ENCODE measurements at regions of chr10 and their contacts with region 1.

Region 1: DNA sequence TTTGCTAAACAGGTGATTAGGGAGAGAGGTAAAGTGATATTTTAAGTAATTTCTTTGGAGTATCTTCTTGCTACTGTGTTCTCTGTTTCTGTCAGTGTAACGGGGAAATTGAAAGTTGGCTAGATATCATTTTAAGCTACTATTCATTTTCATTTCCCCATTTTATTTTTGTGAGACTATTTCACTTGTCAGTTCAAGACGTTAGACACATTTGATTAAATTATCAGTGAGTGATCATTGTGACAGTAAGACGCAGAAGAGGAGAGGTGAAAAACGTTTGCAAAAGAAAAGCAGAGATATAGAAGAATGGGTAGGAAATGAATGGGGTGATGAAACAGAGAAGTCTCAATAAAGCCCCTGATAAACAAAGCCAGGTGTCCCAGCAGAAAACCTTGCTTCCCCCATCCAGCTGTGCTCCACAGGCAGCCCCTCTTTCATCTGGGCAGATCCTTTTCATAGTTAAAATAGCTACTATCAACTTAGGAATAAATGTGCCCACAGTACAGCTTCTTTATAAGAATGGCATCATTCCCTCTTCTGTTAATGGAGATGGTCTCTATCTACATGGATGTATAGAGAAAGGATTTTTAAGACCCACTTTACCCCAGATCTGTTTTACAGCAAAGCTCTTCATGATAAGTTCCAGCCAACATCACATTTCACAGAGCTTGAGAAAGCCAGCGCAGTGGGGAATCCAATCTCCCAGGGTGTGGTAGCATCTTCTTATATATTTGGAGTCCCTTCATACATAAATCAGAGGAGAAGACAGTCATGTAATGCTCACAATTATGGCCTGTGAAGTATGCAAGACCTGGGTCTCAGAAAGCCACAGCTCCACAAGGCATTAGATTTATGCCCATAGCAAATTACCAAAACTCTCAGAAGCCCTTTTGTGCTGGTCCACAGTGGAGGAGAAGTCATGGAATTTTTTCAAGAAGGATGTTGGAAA is 138.1 kb upstream of the ITGB1 start:
- DNase-seq: no peak
- ATAC-seq: peak; percentile 66
- H3K4me3 Mint-ChIP-seq: peak overlapping the region; percentile 36
- H3K27ac Mint-ChIP-seq: peak overlapping the region; percentile 72
- H3K4me1 Mint-ChIP-seq: peaks cover 74% of the 10 kb centered on the region
- H3K27me3 Mint-ChIP-seq: no peaks in the 10 kb centered on the region
- CTCF ChIP-seq: no peak

Region 2: GRCh38 chr10:33032654-33033151 is 63.4 kb before region 1 on chr10:
- CTCF ChIA-PET with region 1: interaction called, 3 read pairs
- POLR2A ChIA-PET with region 1: no interaction called
- intact Hi-C with region 1: loop called (anchors 5 kb)
- DNase-seq: no peak
- ATAC-seq: no peak
- H3K4me3 Mint-ChIP-seq: no peak overlapping the region
- H3K27ac Mint-ChIP-seq: no peak overlapping the region
- H3K4me1 Mint-ChIP-seq: no peaks in the 10 kb centered on the region
- H3K27me3 Mint-ChIP-seq: peaks cover 3% of the 10 kb centered on the region
- CTCF ChIP-seq: no peak

Region 3: DNA sequence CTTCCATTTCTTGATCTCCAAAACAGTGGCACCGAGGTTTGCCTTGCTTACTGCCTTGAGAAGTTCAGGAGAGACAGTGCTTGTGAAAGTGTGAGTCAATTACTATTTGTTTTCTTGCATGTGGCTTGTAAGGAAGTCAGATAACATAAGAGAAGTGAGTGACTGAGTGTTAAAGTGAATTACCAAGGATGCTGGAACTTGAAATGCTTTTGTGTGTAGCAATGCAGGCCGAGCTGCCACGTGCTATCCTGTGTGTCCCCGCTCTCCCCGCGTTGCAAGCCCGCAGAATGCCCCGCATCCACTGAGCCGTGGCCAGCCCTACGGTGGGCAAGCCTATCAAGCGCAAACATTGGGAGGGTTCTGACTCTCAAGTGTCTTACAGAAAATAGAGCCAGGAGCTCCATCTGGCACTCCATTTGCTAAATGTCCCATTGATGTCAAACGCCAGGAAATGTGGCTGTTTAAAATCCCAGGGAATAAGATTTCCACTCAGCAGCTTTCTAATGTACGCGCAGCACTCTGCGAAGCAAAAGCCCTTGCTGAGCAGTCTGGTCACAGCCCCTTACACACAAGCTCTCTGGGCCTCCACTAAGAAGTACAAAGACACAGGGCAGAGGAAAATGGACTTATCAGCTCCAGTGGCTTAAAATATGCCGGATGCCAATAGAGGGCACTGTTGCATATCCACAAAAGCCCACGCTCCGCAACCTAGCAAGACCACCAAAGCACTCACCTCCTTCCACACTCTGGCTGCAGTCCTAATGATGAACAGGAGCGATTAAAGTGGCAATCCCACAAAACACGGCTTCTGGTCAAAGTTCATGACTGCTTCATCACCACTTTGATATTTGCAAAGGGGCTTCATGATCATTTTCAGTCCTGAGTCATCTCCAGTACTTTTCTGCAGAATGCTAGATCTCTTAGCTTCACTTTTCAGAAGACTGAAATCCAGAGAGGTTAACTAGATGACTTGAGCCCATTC is 19.9 kb after region 1 on chr10:
- CTCF ChIA-PET with region 1: no interaction called
- POLR2A ChIA-PET with region 1: interaction called, 3 read pairs
- intact Hi-C with region 1: loop called (anchors 2 kb)
- DNase-seq: no peak
- ATAC-seq: no peak
- H3K4me3 Mint-ChIP-seq: no peak overlapping the region
- H3K27ac Mint-ChIP-seq: peak overlapping the region; percentile 64
- H3K4me1 Mint-ChIP-seq: peaks cover 88% of the 10 kb centered on the region
- H3K27me3 Mint-ChIP-seq: no peaks in the 10 kb centered on the region
- CTCF ChIP-seq: no peak

Region 4: GRCh38 chr10:33661580-33662336 is 565.6 kb after region 1 on chr10:
- CTCF ChIA-PET with region 1: no interaction called
- POLR2A ChIA-PET with region 1: no interaction called
- intact Hi-C with region 1: no loop called
- DNase-seq: no peak
- ATAC-seq: no peak
- H3K4me3 Mint-ChIP-seq: no peak overlapping the region
- H3K27ac Mint-ChIP-seq: no peak overlapping the region
- H3K4me1 Mint-ChIP-seq: no peaks in the 10 kb centered on the region
- H3K27me3 Mint-ChIP-seq: no peaks in the 10 kb centered on the region
- CTCF ChIP-seq: no peak